Stomach (tissue), 19 donors: ENCODE measurements at regions of chr12 and their contacts with region 1.

Region 1: GRCh38 chr12:49288412-49288853 is 6.5 kb upstream of the PRPH start:
- DNase-seq: peak; percentile 58 to 81
- H3K4me3 ChIP-seq: no peak overlapping the region
- H3K27ac ChIP-seq: no peak overlapping the region
- H3K4me1 ChIP-seq: peaks cover 6 to 11% (median 10%) of the 10 kb centered on the region in 4 donors
- H3K27me3 ChIP-seq: peaks cover 0 to 37% (median 3%) of the 10 kb centered on the region in 3 donors
- CTCF ChIP-seq: peak in 5 of 7 experiments; percentile 56 to 87 (median 84)
- EP300 ChIP-seq: no peak
- POLR2A ChIP-seq: no peak

Region 2: DNA sequence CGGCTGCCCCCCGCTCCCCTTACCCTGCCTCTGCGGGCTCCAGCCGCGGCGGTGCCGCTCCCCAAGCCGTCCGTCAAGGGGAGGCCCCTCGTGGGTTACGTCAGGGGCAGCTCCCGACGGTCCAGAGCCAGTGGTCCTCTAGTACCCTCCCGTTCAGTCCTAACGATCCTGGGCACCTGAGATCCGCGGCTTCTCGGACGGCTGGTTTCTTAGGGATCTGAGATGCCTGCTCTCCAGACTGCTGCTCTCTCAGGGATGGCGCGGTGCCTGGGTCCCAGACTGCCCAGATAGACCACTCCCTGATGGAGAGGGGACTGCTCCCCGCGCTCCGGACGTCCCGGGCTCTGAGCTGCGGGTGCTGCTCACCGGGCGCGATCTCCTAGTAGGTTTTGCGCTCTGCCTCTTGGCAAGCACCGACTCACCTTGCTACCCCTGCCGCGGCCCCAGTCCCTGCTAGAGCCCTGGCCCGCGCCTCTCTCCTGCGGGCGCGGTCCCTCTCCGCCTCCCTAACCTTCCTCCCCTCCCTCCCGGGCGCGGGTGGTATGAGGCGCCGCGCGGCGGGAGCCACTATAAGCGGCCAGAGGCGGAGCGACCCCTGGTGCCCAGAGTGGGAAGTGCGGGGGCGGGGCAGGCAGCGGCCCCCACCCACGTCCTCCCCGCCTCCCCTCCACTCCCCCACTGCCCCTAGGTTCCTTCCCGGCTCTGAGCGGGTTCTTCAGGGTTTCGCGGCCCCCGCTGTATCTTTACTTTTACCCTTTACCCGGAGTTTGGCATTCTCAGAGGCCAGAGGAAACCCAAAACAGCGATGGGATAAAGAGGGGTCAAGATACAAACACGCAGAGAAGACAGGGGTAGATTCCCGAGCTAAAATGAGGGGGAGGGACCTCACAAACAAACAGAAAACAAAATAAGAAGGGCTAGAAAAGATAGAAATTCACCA is 48.5 kb after region 1 on chr12 and contains the start of gene C1QL4:
- intact Hi-C with region 1: loop called (anchors 5 kb)
- DNase-seq: peak; percentile 85 to 94
- H3K4me3 ChIP-seq: peak within 1 kb of the TSS; percentile 39 to 55 (median 40)
- H3K27ac ChIP-seq: no peak within 1 kb of the TSS
- H3K4me1 ChIP-seq: peaks cover 12 to 35% (median 21%) of the 10 kb centered on the region in 4 donors
- H3K27me3 ChIP-seq: peaks cover 12 to 97% (median 51%) of the 10 kb centered on the region in 3 donors
- CTCF ChIP-seq: peak in 5 of 7 experiments; percentile 58 to 99 (median 98)
- EP300 ChIP-seq: no peak
- POLR2A ChIP-seq: no peak
- total RNA-seq, gene C1QL4: not detected